HepG2 (cell line): ENCODE measurements at regions of chr4 and their contacts with region 1.

Region 1: GRCh38 chr4:77872723-77873445 is 10.3 kb downstream of the MRPL1 start:
- DNase-seq: peak; percentile 91
- ATAC-seq: peak; percentile 97
- H3K4me3 ChIP-seq: no peak overlapping the region; a peak in 1 of 6 replicates
- H3K27ac ChIP-seq: peak overlapping the region; percentile 72
- H3K4me1 ChIP-seq: peaks cover 61% of the 10 kb centered on the region
- H3K27me3 ChIP-seq: no peaks in the 10 kb centered on the region
- CTCF ChIP-seq: no peak
- EP300 ChIP-seq: peak; percentile 64 to 68; a peak in 2 of 4 replicates
- POLR2A ChIP-seq: no peak
- RAD21 ChIP-seq: no peak

Region 2: GRCh38 chr4:77921701-77922100 is 48.8 kb after region 1 on chr4:
- CTCF ChIA-PET with region 1: no interaction called
- POLR2A ChIA-PET with region 1: no interaction called
- in situ Hi-C with region 1: no loop called
- intact Hi-C with region 1: loop called (anchors 5 kb)
- DNase-seq: peak; percentile 84
- ATAC-seq: peak; percentile 97
- H3K4me3 ChIP-seq: no peak overlapping the region; a peak in 1 of 6 replicates
- H3K27ac ChIP-seq: peak overlapping the region; percentile 63
- H3K4me1 ChIP-seq: peaks cover 32% of the 10 kb centered on the region
- H3K27me3 ChIP-seq: no peaks in the 10 kb centered on the region; a peak in 1 of 5 replicates
- CTCF ChIP-seq: no peak
- EP300 ChIP-seq: peak in 1 of 2 experiments; percentile 79; a peak in 2 of 4 replicates
- POLR2A ChIP-seq: no peak
- RAD21 ChIP-seq: no peak

Region 3: GRCh38 chr4:78065508-78066192 is 192.8 kb after region 1 on chr4:
- CTCF ChIA-PET with region 1: no interaction called
- POLR2A ChIA-PET with region 1: no interaction called
- in situ Hi-C with region 1: no loop called
- intact Hi-C with region 1: no loop called
- DNase-seq: peak; percentile 8
- ATAC-seq: peak; percentile 38; the same call in 1 of the 3 replicates
- H3K4me3 ChIP-seq: no peak overlapping the region
- H3K27ac ChIP-seq: no peak overlapping the region
- H3K4me1 ChIP-seq: peaks cover 41% of the 10 kb centered on the region
- H3K27me3 ChIP-seq: no peaks in the 10 kb centered on the region
- CTCF ChIP-seq: no peak
- EP300 ChIP-seq: no peak
- POLR2A ChIP-seq: no peak
- RAD21 ChIP-seq: no peak

Region 4: GRCh38 chr4:78137532-78137931 is 264.6 kb after region 1 on chr4:
- CTCF ChIA-PET with region 1: no interaction called
- POLR2A ChIA-PET with region 1: no interaction called
- in situ Hi-C with region 1: no loop called
- intact Hi-C with region 1: no loop called
- DNase-seq: no peak
- ATAC-seq: no peak
- H3K4me3 ChIP-seq: no peak overlapping the region
- H3K27ac ChIP-seq: peak overlapping the region; percentile 92
- H3K4me1 ChIP-seq: peaks cover 72% of the 10 kb centered on the region
- H3K27me3 ChIP-seq: no peaks in the 10 kb centered on the region
- CTCF ChIP-seq: no peak
- EP300 ChIP-seq: no peak
- POLR2A ChIP-seq: no peak
- RAD21 ChIP-seq: no peak